AG04450 (cell line): ENCODE measurements at regions of chr9 and their contacts with region 1.

Region 1: GRCh38 chr9:105842023-105842644 is 147.8 kb downstream of the TMEM38B start:
- DNase-seq: no peak
- H3K4me3 ChIP-seq: no peak overlapping the region
- H3K27ac ChIP-seq: no peak overlapping the region
- H3K27me3 ChIP-seq: no peaks in the 10 kb centered on the region
- CTCF ChIP-seq: peak; percentile 87

Region 2: DNA sequence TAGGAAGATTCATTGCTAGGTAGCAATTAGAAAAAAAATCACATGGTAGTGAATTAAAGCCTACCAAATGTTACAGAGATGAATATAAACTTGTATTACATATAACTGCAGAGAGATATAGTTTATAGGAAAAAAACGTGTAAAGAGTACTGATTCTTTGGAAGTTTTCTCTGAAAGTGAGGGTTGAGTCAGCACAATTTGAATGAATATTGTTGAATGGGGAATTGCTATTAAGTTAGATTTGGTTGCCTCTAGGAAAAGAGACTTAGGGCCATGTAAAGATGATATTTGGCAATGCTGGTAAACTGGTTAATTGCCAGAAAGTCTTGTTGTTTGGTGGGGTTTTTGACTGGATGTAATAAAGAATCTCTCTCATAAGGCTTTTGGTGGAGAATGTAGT is 217.0 kb before region 1 on chr9:
- CTCF ChIA-PET with region 1: no interaction called
- POLR2A ChIA-PET with region 1: no interaction called
- DNase-seq: no peak
- H3K4me3 ChIP-seq: no peak overlapping the region
- H3K27ac ChIP-seq: no peak overlapping the region
- H3K27me3 ChIP-seq: no peaks in the 10 kb centered on the region
- CTCF ChIP-seq: no peak

Region 3: DNA sequence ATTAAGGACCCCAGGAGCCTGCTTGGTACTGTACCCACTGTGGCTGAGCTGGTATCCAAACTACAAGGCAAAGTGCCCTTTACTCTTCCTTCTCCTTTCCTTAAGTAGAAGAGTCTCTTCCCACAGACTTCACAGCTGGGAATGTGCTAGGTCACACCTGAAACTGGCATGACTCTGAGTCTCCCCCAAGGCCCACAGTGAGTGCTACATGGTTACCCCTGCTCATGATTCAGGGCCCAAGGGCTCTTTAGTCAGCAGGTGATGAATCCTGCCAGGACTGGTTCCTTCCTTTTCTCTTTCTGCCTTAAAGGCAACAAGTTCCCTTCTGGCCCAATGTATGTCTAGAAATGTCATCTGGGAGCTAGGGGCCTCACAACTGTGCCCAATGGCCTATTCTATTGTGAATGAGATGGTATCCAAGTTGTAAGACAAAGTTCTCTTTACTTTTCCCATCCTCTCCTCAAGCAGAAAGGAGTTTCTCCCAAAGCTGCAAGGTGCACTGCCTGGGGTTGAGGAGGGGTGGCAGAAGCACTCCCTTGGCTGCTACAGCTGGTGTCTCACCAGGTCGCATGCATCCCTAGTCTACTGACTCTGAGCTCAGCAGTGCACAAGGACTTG is 13.4 kb before region 1 on chr9:
- CTCF ChIA-PET with region 1: interaction called, 13 read pairs
- POLR2A ChIA-PET with region 1: no interaction called
- DNase-seq: no peak
- H3K4me3 ChIP-seq: no peak overlapping the region
- H3K27ac ChIP-seq: no peak overlapping the region
- H3K27me3 ChIP-seq: no peaks in the 10 kb centered on the region
- CTCF ChIP-seq: no peak

Region 4: GRCh38 chr9:105854026-105854783 is 12.1 kb after region 1 on chr9:
- CTCF ChIA-PET with region 1: interaction called, 25 read pairs
- POLR2A ChIA-PET with region 1: no interaction called
- DNase-seq: no peak
- H3K4me3 ChIP-seq: no peak overlapping the region
- H3K27ac ChIP-seq: no peak overlapping the region
- H3K27me3 ChIP-seq: no peaks in the 10 kb centered on the region
- CTCF ChIP-seq: no peak

Region 5: GRCh38 chr9:105881654-105882349 is 39.7 kb after region 1 on chr9:
- CTCF ChIA-PET with region 1: interaction called, 66 read pairs
- POLR2A ChIA-PET with region 1: no interaction called
- DNase-seq: peak; percentile 10
- H3K4me3 ChIP-seq: no peak overlapping the region
- H3K27ac ChIP-seq: no peak overlapping the region
- H3K27me3 ChIP-seq: no peaks in the 10 kb centered on the region
- CTCF ChIP-seq: peak; percentile 86

Region 6: DNA sequence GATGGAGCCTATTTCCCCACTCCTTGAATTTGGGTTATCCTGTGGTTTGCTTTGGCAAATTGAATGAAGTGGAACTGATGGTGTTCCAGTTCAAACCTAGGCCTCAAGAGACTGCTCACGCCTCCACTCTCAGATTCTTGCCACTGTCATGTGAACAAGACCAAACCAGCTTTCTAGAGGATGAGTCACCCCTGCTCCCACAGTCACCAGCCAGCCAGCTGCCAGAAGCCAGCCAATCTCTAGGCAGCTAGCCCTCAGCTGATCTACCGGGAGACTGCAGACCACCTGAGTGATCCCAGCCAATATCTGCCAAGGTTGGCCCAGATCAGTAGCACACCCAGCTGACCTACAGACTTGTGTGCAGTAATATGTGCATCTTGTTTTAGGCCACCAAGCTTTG is 152.8 kb after region 1 on chr9:
- CTCF ChIA-PET with region 1: no interaction called
- POLR2A ChIA-PET with region 1: no interaction called
- DNase-seq: no peak
- H3K4me3 ChIP-seq: no peak overlapping the region
- H3K27ac ChIP-seq: no peak overlapping the region
- H3K27me3 ChIP-seq: no peaks in the 10 kb centered on the region
- CTCF ChIP-seq: no peak

Region 7: DNA sequence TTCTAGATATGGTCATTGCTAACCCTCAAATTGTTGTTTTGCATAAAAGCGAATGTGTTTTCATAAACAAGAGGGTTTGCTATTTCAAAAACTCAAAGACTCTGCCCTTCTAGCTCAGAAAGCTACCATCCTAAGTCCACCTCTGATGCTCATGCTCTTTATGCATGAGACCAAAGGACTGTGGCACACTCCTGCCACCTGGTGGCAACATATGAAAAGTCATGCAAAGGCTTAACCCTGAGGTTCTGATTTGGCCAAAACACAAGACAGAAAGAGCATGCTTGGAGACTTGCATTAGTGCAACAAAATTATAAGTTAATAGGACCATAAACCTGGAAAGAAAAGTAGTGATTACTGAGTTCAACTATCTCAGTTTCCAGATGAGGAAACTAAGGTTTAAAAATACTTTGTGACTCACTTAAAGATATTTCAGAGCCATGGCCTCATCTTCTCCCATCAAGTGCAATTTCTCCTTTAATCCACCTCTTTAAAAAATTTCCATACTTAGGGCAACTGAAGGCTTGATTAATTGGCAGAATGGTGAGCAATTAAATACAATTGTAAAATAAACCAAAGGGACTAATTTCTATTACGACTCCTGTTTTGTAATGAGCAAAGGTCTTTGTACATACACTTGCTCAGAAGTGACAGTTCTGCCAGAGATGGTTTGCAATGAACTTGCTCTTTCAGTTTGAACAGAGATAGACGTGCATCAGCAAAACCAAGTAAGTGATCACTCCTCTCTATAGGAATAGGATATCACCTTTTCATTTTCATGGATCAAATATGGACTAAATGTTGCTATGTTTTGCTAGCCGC is 1330.2 kb after region 1 on chr9:
- CTCF ChIA-PET with region 1: interaction called, 61 read pairs
- POLR2A ChIA-PET with region 1: no interaction called
- DNase-seq: peak; percentile 65
- H3K4me3 ChIP-seq: no peak overlapping the region
- H3K27ac ChIP-seq: no peak overlapping the region
- H3K27me3 ChIP-seq: no peaks in the 10 kb centered on the region
- CTCF ChIP-seq: peak; percentile 96